ENCODE measurements at regions of chr17 and their contacts with region 1.

Region 1: DNA sequence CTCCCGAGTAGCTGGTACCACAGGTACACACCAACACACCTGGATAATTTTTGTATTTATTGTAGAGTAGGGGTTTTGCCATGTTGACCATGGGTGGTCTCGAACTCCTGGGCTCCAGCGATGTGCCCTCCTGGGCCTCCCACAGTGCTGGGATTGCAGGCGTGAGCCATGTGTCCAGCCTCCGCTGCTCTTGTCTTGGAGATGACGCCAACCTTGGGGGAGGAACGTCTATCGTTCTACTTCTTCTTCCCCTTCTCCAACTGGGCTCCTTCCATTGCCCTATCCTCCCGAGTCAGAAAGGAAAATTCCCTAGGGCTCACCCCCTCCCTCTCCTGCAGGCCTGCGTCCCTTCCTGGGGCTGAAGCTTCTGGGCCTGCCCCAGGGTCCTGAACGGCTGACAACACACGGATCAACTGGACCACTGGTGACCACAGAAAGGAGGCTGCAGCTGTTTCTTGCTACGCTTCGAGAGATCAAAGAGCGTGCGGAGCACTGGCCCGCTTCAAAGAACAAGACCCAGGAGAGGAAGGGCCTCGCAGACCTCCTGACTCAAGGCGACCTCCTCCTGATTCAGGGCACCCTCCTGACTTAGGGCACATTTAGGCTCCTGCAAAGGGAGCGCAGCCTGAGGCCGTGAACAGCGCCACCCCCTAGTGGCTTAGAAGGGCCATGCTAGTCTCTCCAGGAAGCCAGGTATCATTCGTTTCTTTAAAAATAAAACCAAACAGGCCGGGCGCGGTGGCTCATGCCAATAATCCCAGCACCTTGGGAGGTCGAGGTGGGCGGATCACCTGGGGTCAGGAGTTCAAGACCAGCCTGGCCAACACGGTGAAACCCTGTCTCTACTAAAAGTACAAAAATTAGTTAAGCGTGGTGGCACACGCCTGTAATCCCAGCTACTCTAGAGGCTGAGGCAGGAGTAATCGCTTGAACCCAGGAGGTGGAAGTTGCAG is 48.5 kb upstream of the HELZ start:
- DNase-seq: peak; percentile 58 to 84 (median 63)
- ATAC-seq: peak; percentile 45 to 79 (median 74)
- H3K4me3 ChIP-seq: peak overlapping the region in 3 of 12 donors; percentile 2 to 38 (median 20)
- H3K27ac ChIP-seq: peak overlapping the region in 1 of 12 donors; percentile 24
- H3K4me1 ChIP-seq: peaks cover 0 to 28% (median 19%) of the 10 kb centered on the region in 12 donors
- H3K27me3 ChIP-seq: no peaks in the 10 kb centered on the region
- CTCF ChIP-seq: peak; percentile 65 to 89 (median 82)
- POLR2A ChIP-seq: no peak

Region 2: GRCh38 chr17:67171560-67171959 is 122.0 kb before region 1 on chr17:
- intact Hi-C with region 1: no loop called
- DNase-seq: no peak
- ATAC-seq: no peak
- H3K4me3 ChIP-seq: no peak overlapping the region
- H3K27ac ChIP-seq: no peak overlapping the region
- H3K4me1 ChIP-seq: peaks cover 0 to 3% (median 0%) of the 10 kb centered on the region in 12 donors
- H3K27me3 ChIP-seq: no peaks in the 10 kb centered on the region
- CTCF ChIP-seq: no peak
- POLR2A ChIP-seq: no peak

Region 3: DNA sequence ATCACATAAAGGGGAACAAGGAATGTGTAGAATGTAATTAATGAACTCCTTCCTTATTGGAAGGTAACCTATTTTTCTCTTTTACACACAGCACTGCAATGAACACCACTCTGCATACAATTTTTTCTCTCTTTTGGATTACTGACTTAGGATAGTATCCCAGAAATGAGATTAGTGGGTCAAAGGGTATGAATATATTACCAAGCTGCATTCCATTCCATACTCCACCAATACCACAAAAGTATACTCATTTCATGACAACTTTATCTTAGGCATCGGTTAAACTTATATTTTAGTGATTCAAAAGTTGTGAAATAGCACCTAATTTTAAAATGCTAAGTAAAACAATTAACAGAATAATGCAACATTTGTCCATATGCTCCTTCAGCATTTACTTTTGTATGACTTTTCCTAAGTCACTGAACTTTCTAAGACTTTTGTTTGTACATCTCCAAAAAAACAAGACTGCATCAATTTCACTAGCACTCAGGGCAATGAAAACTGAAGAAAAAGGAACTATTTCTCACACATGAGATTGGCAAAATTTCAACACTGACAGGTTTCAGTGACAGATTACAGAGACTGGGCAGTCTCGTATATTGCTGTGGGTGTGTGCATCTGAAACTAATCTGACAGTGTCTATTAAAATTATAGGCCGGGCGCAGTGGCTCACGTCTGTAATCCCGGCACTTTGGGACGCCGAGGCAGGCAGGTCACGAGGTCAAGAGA is 80.7 kb before region 1 on chr17:
- intact Hi-C with region 1: loop called in 1 of 10 experiments (anchors 10 kb)
- DNase-seq: no peak
- ATAC-seq: no peak
- H3K4me3 ChIP-seq: no peak overlapping the region
- H3K27ac ChIP-seq: no peak overlapping the region
- H3K4me1 ChIP-seq: peaks cover 0 to 48% (median 13%) of the 10 kb centered on the region in 12 donors
- H3K27me3 ChIP-seq: no peaks in the 10 kb centered on the region
- CTCF ChIP-seq: no peak
- POLR2A ChIP-seq: no peak

Region 4: GRCh38 chr17:67221062-67221998 is 72.2 kb before region 1 on chr17:
- intact Hi-C with region 1: loop called in 9 of 10 experiments (anchors 1 to 10 kb)
- DNase-seq: peak in 2 of 5 donors; percentile 30 to 42
- ATAC-seq: peak in 3 of 4 donors; percentile 51 to 77 (median 59)
- H3K4me3 ChIP-seq: no peak overlapping the region
- H3K27ac ChIP-seq: no peak overlapping the region
- H3K4me1 ChIP-seq: peaks cover 0 to 43% (median 14%) of the 10 kb centered on the region in 12 donors
- H3K27me3 ChIP-seq: no peaks in the 10 kb centered on the region
- CTCF ChIP-seq: peak; percentile 10 to 78 (median 53)
- POLR2A ChIP-seq: no peak

Region 5: GRCh38 chr17:67245073-67245755 is 48.3 kb before region 1 on chr17 and contains the start of gene HELZ:
- intact Hi-C with region 1: loop called in 2 of 10 experiments (anchors 5 to 10 kb)
- DNase-seq: peak; percentile 78 to 88 (median 79)
- ATAC-seq: peak; percentile 54 to 95 (median 88)
- H3K4me3 ChIP-seq: peak within 1 kb of the TSS; percentile 68 to 100 (median 96)
- H3K27ac ChIP-seq: peak within 1 kb of the TSS; percentile 59 to 94 (median 88)
- H3K4me1 ChIP-seq: peaks cover 12 to 55% (median 35%) of the 10 kb centered on the region in 12 donors
- H3K27me3 ChIP-seq: no peaks in the 10 kb centered on the region
- CTCF ChIP-seq: no peak
- POLR2A ChIP-seq: peak in 1 of 2 donors; percentile 19
- total RNA-seq, gene HELZ: 26.3 to 48.4 (median 32.5) TPM

Region 6: GRCh38 chr17:67376737-67377487 is 83.4 kb after region 1 on chr17 and contains the start of gene PITPNC1:
- intact Hi-C with region 1: no loop called
- DNase-seq: peak; percentile 88 to 94 (median 89)
- ATAC-seq: peak; percentile 69 to 89 (median 82)
- H3K4me3 ChIP-seq: peak within 1 kb of the TSS; percentile 62 to 96 (median 88)
- H3K27ac ChIP-seq: peak within 1 kb of the TSS; percentile 88 to 97 (median 95)
- H3K4me1 ChIP-seq: peaks cover 0 to 43% (median 16%) of the 10 kb centered on the region in 12 donors
- H3K27me3 ChIP-seq: no peaks in the 10 kb centered on the region
- CTCF ChIP-seq: peak in 3 of 12 donors; percentile 10 to 19 (median 15)
- POLR2A ChIP-seq: peak; percentile 31 to 84
- total RNA-seq, gene PITPNC1: 8.4 to 20.8 (median 11.3) TPM

Measured in heart left ventricle (tissue), 16 donors.